Naive thymus-derived CD4-positive, alpha-beta T cell (primary cell): ENCODE measurements at regions of chr11 and their contacts with region 1.

Region 1: DNA sequence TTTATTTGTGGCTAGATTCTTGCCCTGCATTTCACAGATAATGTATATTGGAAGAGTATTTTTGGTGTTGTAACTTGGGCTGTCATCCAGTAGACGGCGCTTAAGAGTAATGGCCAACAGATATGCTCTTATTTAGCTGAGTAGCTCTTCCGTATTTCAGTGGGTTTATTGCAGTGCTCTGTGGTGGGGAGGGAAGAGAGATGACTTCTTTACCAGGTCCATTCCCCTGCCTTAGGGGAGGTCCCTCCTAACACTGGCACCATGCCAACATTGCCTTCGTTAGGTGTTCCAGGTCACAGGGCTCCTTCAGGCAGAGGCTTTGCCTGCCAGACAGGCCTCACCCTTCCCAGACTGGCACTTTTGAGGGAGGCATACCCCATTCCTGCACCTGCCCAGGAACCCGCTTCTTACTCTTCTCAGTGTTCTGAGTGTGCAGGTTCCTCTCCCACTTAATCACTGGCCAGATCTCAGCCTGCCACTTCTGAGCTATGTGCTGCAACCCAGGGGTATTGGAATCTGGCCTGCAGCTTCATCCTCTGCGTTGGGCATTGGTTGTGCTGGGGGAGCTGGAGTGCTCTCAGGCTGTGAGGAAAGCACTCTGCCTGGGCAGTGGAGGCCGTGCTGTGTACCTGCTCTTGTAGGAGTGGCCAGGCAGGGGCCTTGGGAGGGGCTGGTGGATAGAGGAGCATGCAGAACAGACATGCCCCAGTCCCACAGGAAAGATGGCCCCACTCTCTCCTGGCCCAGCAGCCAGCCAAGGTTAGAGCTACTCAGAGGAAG is 29.4 kb upstream of the SLN start:
- DNase-seq: no peak
- ATAC-seq: peak; percentile 58
- H3K4me3 ChIP-seq: no peak overlapping the region
- H3K4me3 Mint-ChIP-seq: no peak overlapping the region
- H3K27ac ChIP-seq: no peak overlapping the region
- H3K27ac Mint-ChIP-seq: no peak overlapping the region
- H3K4me1 ChIP-seq: no peaks in the 10 kb centered on the region
- H3K4me1 Mint-ChIP-seq: peaks cover 0 to 5% (median 0%) of the 10 kb centered on the region in 7 donors
- H3K27me3 ChIP-seq: no peaks in the 10 kb centered on the region
- H3K27me3 Mint-ChIP-seq: peaks cover 28 to 59% (median 46%) of the 10 kb centered on the region in 5 donors

Region 2: GRCh38 chr11:107757661-107758060 is 16.4 kb after region 1 on chr11:
- CTCF ChIA-PET with region 1: no interaction called
- POLR2A ChIA-PET with region 1: no interaction called
- intact Hi-C with region 1: no loop called
- DNase-seq: no peak
- ATAC-seq: no peak
- H3K4me3 ChIP-seq: no peak overlapping the region
- H3K4me3 Mint-ChIP-seq: no peak overlapping the region
- H3K27ac ChIP-seq: no peak overlapping the region
- H3K27ac Mint-ChIP-seq: no peak overlapping the region
- H3K4me1 ChIP-seq: no peaks in the 10 kb centered on the region
- H3K4me1 Mint-ChIP-seq: no peaks in the 10 kb centered on the region
- H3K27me3 ChIP-seq: no peaks in the 10 kb centered on the region
- H3K27me3 Mint-ChIP-seq: peaks cover 14 to 62% (median 44%) of the 10 kb centered on the region in 5 donors

Region 3: GRCh38 chr11:107770551-107770951 is 29.3 kb after region 1 on chr11:
- CTCF ChIA-PET with region 1: no interaction called
- POLR2A ChIA-PET with region 1: no interaction called
- intact Hi-C with region 1: loop called in 1 of 2 experiments (anchors 2 kb)
- DNase-seq: no peak
- ATAC-seq: no peak
- H3K4me3 ChIP-seq: no peak overlapping the region
- H3K4me3 Mint-ChIP-seq: no peak overlapping the region
- H3K27ac ChIP-seq: no peak overlapping the region
- H3K27ac Mint-ChIP-seq: no peak overlapping the region
- H3K4me1 ChIP-seq: no peaks in the 10 kb centered on the region
- H3K4me1 Mint-ChIP-seq: peaks cover 0 to 2% (median 0%) of the 10 kb centered on the region in 7 donors
- H3K27me3 ChIP-seq: no peaks in the 10 kb centered on the region
- H3K27me3 Mint-ChIP-seq: peaks cover 0 to 16% (median 10%) of the 10 kb centered on the region in 5 donors

Region 4: GRCh38 chr11:107799218-107799859 is 58.1 kb after region 1 on chr11:
- CTCF ChIA-PET with region 1: no interaction called
- POLR2A ChIA-PET with region 1: no interaction called
- intact Hi-C with region 1: loop called in 1 of 2 experiments (anchors 1 kb)
- DNase-seq: peak; percentile 13 to 52 (median 31)
- ATAC-seq: peak; percentile 78
- H3K4me3 ChIP-seq: no peak overlapping the region
- H3K4me3 Mint-ChIP-seq: no peak overlapping the region
- H3K27ac ChIP-seq: no peak overlapping the region
- H3K27ac Mint-ChIP-seq: no peak overlapping the region
- H3K4me1 ChIP-seq: no peaks in the 10 kb centered on the region
- H3K4me1 Mint-ChIP-seq: peaks cover 0 to 3% (median 0%) of the 10 kb centered on the region in 7 donors
- H3K27me3 ChIP-seq: no peaks in the 10 kb centered on the region
- H3K27me3 Mint-ChIP-seq: no peaks in the 10 kb centered on the region

Region 5: GRCh38 chr11:107864591-107864990 is 123.4 kb after region 1 on chr11:
- CTCF ChIA-PET with region 1: no interaction called
- POLR2A ChIA-PET with region 1: no interaction called
- intact Hi-C with region 1: no loop called
- DNase-seq: no peak
- ATAC-seq: no peak
- H3K4me3 ChIP-seq: no peak overlapping the region
- H3K4me3 Mint-ChIP-seq: no peak overlapping the region
- H3K27ac ChIP-seq: no peak overlapping the region
- H3K27ac Mint-ChIP-seq: no peak overlapping the region
- H3K4me1 ChIP-seq: no peaks in the 10 kb centered on the region
- H3K4me1 Mint-ChIP-seq: peaks cover 3 to 4% (median 3%) of the 10 kb centered on the region in 7 donors
- H3K27me3 ChIP-seq: no peaks in the 10 kb centered on the region
- H3K27me3 Mint-ChIP-seq: peaks cover 0 to 25% (median 4%) of the 10 kb centered on the region in 5 donors

Region 6: GRCh38 chr11:107898270-107898669 is 157.0 kb after region 1 on chr11:
- CTCF ChIA-PET with region 1: no interaction called
- POLR2A ChIA-PET with region 1: no interaction called
- intact Hi-C with region 1: loop called (anchors 1 kb)
- DNase-seq: peak in 2 of 9 donors; percentile 3 to 9
- ATAC-seq: peak; percentile 76
- H3K4me3 ChIP-seq: no peak overlapping the region
- H3K4me3 Mint-ChIP-seq: no peak overlapping the region
- H3K27ac ChIP-seq: no peak overlapping the region
- H3K27ac Mint-ChIP-seq: no peak overlapping the region
- H3K4me1 ChIP-seq: no peaks in the 10 kb centered on the region
- H3K4me1 Mint-ChIP-seq: no peaks in the 10 kb centered on the region
- H3K27me3 ChIP-seq: no peaks in the 10 kb centered on the region
- H3K27me3 Mint-ChIP-seq: peaks cover 0 to 11% (median 9%) of the 10 kb centered on the region in 5 donors

Region 7: DNA sequence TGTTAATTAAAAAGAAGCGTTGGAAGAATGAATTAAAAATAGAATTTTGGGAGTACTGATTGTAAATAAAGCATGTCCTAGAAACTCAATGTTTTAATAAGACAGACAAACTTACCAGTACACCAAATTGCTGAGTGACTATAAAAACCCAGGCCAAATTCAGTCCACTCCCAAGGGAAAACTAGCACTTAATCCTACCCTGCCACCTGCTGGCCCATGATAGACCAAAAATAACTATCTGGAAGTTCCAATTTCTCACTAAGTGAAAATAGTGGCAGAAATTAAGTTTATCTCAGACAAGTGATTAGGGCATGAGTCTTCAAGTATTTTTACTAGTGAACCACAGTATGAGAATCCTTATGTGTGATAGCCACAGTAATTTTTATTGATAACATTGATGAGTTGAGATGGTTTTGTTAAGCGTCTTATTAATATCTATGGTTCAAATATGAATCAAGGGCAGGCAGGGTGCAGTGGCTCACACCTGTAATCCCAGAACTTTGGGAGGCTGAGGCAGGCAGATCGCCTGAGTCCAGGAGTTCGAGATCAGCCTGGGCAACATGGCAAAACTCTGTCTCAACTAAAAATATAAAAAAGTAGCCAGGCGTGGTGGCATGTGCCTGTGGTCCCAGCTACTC is 913.9 kb after region 1 on chr11:
- CTCF ChIA-PET with region 1: no interaction called
- POLR2A ChIA-PET with region 1: no interaction called
- intact Hi-C with region 1: loop called in 1 of 2 experiments (anchors 5 kb)
- DNase-seq: peak in 5 of 9 donors; percentile 5 to 31 (median 13)
- ATAC-seq: no peak
- H3K4me3 ChIP-seq: no peak overlapping the region
- H3K4me3 Mint-ChIP-seq: no peak overlapping the region
- H3K27ac ChIP-seq: no peak overlapping the region
- H3K27ac Mint-ChIP-seq: no peak overlapping the region
- H3K4me1 ChIP-seq: no peaks in the 10 kb centered on the region
- H3K4me1 Mint-ChIP-seq: peaks cover 0 to 5% (median 0%) of the 10 kb centered on the region in 7 donors
- H3K27me3 ChIP-seq: no peaks in the 10 kb centered on the region
- H3K27me3 Mint-ChIP-seq: peaks cover 0 to 26% (median 0%) of the 10 kb centered on the region in 5 donors